ENCODE measurements at regions of chr16 and their contacts with region 1.

Region 1: DNA sequence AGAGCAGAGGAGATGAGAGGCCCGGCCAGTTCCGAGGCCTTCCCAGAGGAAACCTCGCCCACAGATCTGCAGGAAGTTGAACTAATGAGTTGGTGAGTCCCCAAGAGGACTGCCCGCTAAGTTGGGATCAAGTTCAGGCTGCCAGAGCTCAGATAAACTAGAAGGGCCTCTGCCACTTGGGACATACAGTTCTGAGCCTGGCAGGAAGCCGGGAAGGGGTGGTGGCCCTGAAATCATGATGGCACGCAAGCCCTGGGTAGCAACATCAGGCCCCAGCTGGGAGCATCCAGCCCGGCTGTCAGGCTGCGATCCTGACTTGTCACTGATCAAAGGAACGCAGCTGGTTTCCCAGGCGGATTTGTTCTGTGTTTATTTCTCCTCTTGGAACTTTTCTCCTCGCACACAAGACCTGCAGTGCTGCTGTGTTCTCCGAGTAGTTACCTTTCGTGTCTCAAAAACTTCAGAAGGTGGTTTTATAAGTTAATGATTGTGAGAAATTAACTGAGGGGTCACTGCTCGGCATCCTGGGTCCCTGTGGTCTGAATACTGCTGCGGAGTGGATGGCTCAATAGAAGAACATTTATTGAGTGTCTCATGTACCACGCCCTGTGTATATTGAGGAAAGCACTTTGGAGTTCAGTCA is 8.0 kb upstream of the WFDC1 start:
- DNase-seq: no peak
- ATAC-seq: no peak
- H3K4me3 ChIP-seq: no peak overlapping the region
- H3K27ac ChIP-seq: no peak overlapping the region
- H3K4me1 ChIP-seq: 0 out of 3 replicates have a peak, but pooled peaks cover 5% of the 10 kb centered on the region
- CTCF ChIP-seq: no peak
- EP300 ChIP-seq: no peak
- POLR2A ChIP-seq: no peak
- RAD21 ChIP-seq: no peak

Region 2: DNA sequence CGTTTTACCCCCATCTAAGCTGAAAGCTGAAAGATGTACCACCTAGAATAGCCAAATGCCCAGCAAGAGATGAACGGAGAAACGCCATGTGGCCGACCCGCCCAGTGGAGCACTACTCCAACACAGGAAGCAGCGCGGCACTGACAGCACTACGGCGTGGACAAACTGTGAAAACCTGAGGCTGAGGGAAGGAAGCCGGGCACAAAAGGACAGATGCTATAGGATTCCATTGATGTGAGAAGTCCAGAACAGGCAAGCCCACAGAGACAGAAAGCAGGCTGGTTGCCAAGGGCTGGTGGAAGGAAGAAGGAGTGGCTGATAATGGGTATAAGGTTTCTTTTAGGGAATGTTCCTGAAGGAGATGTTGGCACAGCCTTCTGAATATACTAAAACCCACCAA is 214.7 kb before region 1 on chr16:
- CTCF ChIA-PET with region 1: no interaction called
- POLR2A ChIA-PET with region 1: no interaction called
- DNase-seq: no peak
- ATAC-seq: no peak
- H3K4me3 ChIP-seq: no peak overlapping the region
- H3K27ac ChIP-seq: no peak overlapping the region
- H3K4me1 ChIP-seq: no peaks in the 10 kb centered on the region
- CTCF ChIP-seq: no peak
- EP300 ChIP-seq: no peak
- POLR2A ChIP-seq: no peak
- RAD21 ChIP-seq: no peak

Region 3: DNA sequence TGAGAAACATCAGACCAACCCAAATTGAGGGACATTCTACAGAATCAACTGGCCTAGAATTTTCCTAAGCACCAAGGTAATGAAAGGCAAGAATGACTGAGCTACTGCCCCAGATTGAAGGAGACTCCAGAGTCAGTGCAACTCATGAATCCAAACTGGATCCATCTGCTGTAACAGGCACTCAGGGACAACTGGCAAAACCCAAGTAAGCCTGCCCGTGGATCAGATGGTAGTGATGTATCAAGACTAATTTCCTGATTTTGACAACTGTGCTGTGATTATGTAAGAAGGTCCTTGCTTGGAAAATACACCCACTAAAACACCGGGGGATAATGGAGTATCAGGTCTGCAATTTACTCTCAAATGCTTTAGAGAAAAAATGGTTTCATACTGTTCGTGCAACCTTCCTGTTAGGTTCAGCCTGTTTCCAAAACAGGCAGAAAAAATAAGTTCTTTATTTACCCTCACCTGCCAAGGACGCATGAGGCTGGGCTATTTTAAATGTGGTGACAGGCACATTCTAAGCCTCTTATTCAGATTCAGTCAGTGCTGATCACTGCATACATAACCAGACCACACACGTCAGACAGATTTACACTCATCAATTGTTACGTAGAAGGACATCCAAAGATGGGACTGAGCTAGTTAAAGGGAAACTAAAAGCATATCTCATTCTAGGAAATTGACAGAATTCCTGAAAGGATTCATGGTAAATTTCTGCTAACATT is 176.9 kb before region 1 on chr16:
- CTCF ChIA-PET with region 1: no interaction called
- POLR2A ChIA-PET with region 1: no interaction called
- DNase-seq: no peak
- ATAC-seq: no peak
- H3K4me3 ChIP-seq: no peak overlapping the region
- H3K27ac ChIP-seq: no peak overlapping the region
- H3K4me1 ChIP-seq: no peaks in the 10 kb centered on the region
- CTCF ChIP-seq: no peak
- EP300 ChIP-seq: no peak
- POLR2A ChIP-seq: no peak
- RAD21 ChIP-seq: no peak

Region 4: DNA sequence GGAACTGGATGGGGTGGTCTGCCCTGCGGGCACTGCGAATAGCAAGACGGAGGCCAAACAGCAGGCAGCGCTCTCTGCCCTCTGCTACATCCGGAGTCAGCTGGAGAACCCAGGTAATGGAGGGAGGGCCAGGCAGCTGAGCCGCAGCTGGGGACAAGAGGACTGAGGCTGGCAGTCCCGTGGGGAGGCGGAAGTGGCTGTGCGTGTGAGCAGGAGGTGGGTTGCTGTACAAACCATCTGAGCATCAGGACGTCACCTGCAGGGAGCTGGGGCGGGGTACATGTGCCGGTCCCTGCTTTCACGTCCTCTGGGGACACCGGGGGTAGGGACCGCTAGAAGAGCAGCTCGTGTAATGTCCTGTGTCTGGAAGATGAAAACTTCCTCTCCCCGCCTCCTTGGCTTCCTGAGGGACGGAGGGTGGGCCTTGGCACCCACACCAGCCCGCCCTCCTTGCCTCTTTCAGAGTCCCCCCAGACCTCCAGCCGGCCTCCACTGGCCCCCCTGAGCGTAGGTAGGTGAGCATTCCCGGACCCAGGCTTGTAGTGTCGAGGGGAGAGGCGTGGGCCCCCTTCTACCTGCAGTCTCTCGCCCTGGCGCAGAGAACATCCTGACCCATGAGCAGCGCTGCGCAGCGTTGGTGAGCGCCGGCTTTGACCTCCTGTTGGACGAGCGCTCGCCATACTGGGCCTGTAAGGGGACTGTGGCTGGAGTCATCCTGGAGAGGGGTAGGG is 92.1 kb before region 1 on chr16:
- CTCF ChIA-PET with region 1: no interaction called
- POLR2A ChIA-PET with region 1: interaction called, 11 read pairs
- DNase-seq: no peak
- ATAC-seq: no peak
- H3K4me3 ChIP-seq: no peak overlapping the region
- H3K27ac ChIP-seq: no peak overlapping the region
- H3K4me1 ChIP-seq: no peaks in the 10 kb centered on the region
- CTCF ChIP-seq: no peak
- EP300 ChIP-seq: no peak
- POLR2A ChIP-seq: no peak
- RAD21 ChIP-seq: no peak

Measured in A549 (cell line).